ENCODE measurements at regions of chr12 and their contacts with region 1.

Region 1: GRCh38 chr12:6914246-6914946 is at the start of gene ENO2:
- DNase-seq: peak; percentile 63 to 87 (median 78)
- ATAC-seq: peak; percentile 89
- H3K4me3 ChIP-seq: peak within 1 kb of the TSS; percentile 19
- H3K4me1 ChIP-seq: peaks cover 16% of the 10 kb centered on the region
- CTCF ChIP-seq: no peak
- total RNA-seq, gene ENO2: 4.5 to 67.3 (median 7.6) TPM

Region 2: GRCh38 chr12:6873094-6874014 is 41.0 kb before region 1 on chr12 and contains the start of gene SPSB2:
- intact Hi-C with region 1: no loop called
- DNase-seq: peak; percentile 99 to 100 (median 100)
- ATAC-seq: peak; percentile 89
- H3K4me3 ChIP-seq: peak within 1 kb of the TSS; percentile 70
- H3K4me1 ChIP-seq: peaks cover 29% of the 10 kb centered on the region
- CTCF ChIP-seq: no peak
- total RNA-seq, gene SPSB2: 9.7 to 11.7 (median 10.6) TPM

Region 3: GRCh38 chr12:7092229-7092985 is 178.0 kb after region 1 on chr12 and contains the start of gene C1R:
- intact Hi-C with region 1: loop called in 1 of 2 experiments (anchors 10 kb)
- DNase-seq: peak; percentile 76 to 80 (median 76)
- ATAC-seq: peak; percentile 76
- H3K4me3 ChIP-seq: no peak within 1 kb of the TSS
- H3K4me1 ChIP-seq: peaks cover 5% of the 10 kb centered on the region
- CTCF ChIP-seq: peak; percentile 79
- total RNA-seq, gene C1R: 38.7 to 273 (median 222) TPM

Measured in mucosa of descending colon (tissue), 3 donors.